Uterus (tissue), 4 donors: ENCODE measurements at regions of chr1 and their contacts with region 1.

Region 1: DNA sequence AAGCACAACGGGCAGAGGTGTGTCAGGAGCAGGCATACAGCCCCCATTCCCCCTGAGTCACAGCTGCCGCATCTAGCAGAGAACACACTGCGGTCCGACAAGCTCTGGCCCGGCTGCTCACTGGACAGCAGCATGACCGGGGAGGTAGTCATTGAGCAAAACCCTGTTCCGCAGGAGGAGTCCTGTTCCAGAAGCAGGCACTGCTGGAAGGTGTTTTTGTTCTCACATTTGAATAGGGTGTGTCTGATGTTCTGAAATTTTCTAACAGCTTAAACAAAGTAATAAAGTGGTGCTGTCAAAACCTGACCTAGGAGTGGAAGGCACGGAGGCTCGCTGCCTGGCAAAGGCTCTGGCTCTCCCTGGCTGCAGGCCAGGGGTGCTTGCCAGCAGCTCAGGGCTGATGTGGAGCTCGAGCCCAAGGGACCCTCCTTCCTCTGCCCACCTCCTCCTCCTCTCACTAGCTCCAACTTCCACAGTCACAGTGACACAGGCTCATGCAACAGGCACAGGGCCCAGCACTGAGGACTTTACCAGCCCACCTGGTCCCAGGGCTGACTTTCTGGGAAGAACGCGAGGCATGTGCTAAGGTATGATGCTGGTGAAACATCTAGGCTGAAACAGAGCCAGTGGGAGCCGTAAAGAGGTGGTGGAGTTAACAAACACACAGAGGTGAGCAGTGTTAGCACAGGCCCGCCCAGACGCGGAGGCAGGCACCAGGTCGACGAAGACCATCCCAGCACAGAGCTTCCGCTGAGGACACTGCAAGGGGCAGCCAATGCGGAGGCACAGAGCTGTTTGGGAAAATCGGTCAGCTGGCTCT is 118.6 kb upstream of the IFFO2 start:
- DNase-seq: no peak
- H3K4me3 ChIP-seq: no peak overlapping the region
- H3K27ac ChIP-seq: peak overlapping the region; percentile 5 to 49
- H3K4me1 ChIP-seq: no peaks in the 10 kb centered on the region
- H3K27me3 ChIP-seq: no peaks in the 10 kb centered on the region
- CTCF ChIP-seq: no peak
- POLR2A ChIP-seq: no peak

Region 2: DNA sequence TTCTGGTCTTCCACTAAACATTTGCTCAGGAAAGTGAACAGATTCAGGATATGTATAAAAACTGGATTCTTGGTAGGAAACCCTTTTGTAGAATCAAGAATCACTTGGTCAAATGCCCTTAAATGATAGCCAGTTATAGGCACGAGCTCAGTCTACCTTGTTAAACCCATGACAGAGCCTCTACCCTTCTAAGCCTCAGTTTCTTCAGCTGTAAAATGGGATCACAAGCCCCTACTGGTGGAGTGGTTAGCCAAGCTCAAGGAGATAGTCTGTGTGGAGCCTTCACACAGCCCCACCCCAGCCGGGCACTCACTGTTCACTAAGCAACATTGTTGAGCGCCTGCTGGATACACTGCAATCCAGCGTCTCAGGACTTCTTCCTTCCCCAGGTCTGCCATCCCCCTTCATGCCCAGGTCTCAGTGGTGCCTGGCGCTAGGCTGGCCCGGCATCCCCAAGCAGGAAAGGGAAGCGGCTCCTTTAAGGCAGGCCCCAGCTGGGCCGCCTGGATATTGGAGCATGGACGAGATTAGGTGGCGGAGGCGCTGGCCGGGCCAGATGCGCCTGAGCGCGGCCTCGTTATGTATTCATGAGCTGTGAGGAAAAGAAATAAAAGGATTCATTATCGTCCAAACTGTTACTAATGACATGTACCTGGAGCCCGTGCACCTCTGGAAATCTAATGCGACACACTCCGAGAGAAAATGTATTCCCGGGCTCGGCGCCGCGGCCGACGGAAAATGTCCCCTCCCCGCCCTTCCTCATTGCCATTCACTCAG is 291.2 kb before region 1 on chr1:
- intact Hi-C with region 1: no loop called
- DNase-seq: no peak
- H3K4me3 ChIP-seq: no peak overlapping the region
- H3K27ac ChIP-seq: no peak overlapping the region
- H3K4me1 ChIP-seq: no peaks in the 10 kb centered on the region
- H3K27me3 ChIP-seq: no peaks in the 10 kb centered on the region
- CTCF ChIP-seq: no peak
- POLR2A ChIP-seq: no peak

Region 3: DNA sequence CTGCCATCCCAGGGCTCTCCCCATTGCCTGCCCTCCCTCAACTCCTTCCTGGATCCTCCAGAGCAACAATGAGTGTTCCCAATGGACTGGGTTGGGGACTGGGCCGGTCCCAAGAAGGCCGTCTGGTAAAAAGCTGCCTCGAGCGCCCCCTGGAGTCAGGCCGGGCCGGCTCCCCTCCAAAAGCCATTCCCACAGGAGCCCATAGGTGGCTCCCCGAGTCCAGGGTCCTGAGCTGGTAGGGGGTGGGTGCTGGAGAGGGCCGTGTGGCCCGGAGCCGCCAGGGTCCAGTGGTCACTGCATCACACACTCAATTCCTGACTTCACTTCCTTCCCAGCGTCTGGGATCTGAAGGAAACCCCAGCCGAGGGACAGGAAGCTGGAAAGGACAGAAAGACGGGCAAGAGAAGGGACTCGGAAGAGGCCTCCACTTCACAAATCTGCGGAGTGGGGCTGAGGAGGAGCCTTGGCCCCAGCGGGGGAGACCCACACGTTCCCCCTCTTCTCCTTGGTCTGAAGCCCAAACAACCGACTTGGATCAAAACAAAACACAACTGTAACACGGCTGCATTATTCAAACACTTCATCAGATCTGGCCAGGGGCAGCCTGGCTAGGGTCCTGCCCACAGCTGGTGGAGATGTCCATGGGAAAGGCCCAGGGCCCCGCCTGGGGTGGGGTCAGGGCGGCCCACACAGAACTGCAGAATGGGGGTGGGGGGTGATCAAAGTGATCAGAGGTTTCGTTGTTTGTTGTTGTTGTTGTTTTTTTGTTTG is 161.9 kb before region 1 on chr1:
- intact Hi-C with region 1: loop called (anchors 10 kb)
- DNase-seq: peak; percentile 84 to 85
- H3K4me3 ChIP-seq: no peak overlapping the region
- H3K27ac ChIP-seq: peak overlapping the region; percentile 57 to 79
- H3K4me1 ChIP-seq: no peaks in the 10 kb centered on the region
- H3K27me3 ChIP-seq: no peaks in the 10 kb centered on the region
- CTCF ChIP-seq: peak; percentile 91 to 98 (median 96)
- POLR2A ChIP-seq: no peak